ENCODE measurements at regions of chr3 and their contacts with region 1.

Region 1: GRCh38 chr3:40191850-40192448 is 117.6 kb upstream of the EIF1B start:
- DNase-seq: peak; percentile 63
- H3K4me3 ChIP-seq: no peak overlapping the region
- H3K27ac ChIP-seq: no peak overlapping the region
- H3K4me1 ChIP-seq: no peaks in the 10 kb centered on the region
- H3K27me3 ChIP-seq: no peaks in the 10 kb centered on the region
- CTCF ChIP-seq: peak; percentile 76 to 88
- POLR2A ChIP-seq: no peak

Region 2: DNA sequence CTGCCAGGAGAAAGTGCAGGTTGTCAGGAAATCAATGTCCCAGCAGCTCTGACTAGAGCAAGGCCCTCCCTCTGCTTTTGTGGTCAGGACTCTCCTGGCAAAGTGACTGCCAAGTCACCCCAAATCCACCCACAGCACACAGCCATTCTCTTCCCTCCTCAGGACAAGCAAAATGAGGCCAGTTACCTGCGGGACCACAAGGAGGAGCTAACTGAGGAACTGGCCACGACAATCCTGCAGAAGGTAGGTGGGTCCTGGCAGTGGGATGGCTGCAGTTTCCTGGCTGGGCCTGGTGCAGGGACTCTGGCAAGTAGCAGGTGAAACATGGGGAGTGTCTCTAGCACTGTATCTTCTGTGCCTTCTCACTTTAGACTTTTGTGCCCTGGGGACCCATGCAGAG is 25.0 kb before region 1 on chr3:
- CTCF ChIA-PET with region 1: no interaction called
- POLR2A ChIA-PET with region 1: no interaction called
- dilution Hi-C with region 1: no loop called
- intact Hi-C with region 1: no loop called
- DNase-seq: no peak
- H3K4me3 ChIP-seq: no peak overlapping the region
- H3K27ac ChIP-seq: no peak overlapping the region
- H3K4me1 ChIP-seq: no peaks in the 10 kb centered on the region
- H3K27me3 ChIP-seq: no peaks in the 10 kb centered on the region
- CTCF ChIP-seq: no peak
- POLR2A ChIP-seq: no peak

Region 3: GRCh38 chr3:40309418-40309924 is 117.5 kb after region 1 on chr3 and contains the start of gene EIF1B:
- CTCF ChIA-PET with region 1: interaction called, 261 read pairs
- POLR2A ChIA-PET with region 1: no interaction called
- dilution Hi-C with region 1: no loop called
- intact Hi-C with region 1: loop called (anchors 2 kb)
- DNase-seq: peak; percentile 99
- H3K4me3 ChIP-seq: peak within 1 kb of the TSS; percentile 85 to 100 (median 98)
- H3K27ac ChIP-seq: peak within 1 kb of the TSS; percentile 93
- H3K4me1 ChIP-seq: peaks cover 14% of the 10 kb centered on the region
- H3K27me3 ChIP-seq: no peaks in the 10 kb centered on the region
- CTCF ChIP-seq: peak; percentile 96 to 97
- POLR2A ChIP-seq: peak; percentile 96
- total RNA-seq, gene EIF1B: 44.1 and 46.0 TPM in 2 replicates

Region 4: GRCh38 chr3:40546816-40547215 is 354.9 kb after region 1 on chr3:
- CTCF ChIA-PET with region 1: no interaction called
- POLR2A ChIA-PET with region 1: no interaction called
- dilution Hi-C with region 1: no loop called
- intact Hi-C with region 1: no loop called
- DNase-seq: no peak
- H3K4me3 ChIP-seq: no peak overlapping the region
- H3K27ac ChIP-seq: no peak overlapping the region
- H3K4me1 ChIP-seq: no peaks in the 10 kb centered on the region
- H3K27me3 ChIP-seq: no peaks in the 10 kb centered on the region
- CTCF ChIP-seq: no peak
- POLR2A ChIP-seq: no peak

Measured in endothelial cell of umbilical vein (primary cell).